OCI-LY7 (cell line): ENCODE measurements at regions of chr20 and their contacts with region 1.

Region 1: GRCh38 chr20:19074828-19075516 is 137.5 kb upstream of the SLC24A3 start:
- DNase-seq: no peak
- H3K4me3 ChIP-seq: no peak overlapping the region
- H3K27ac ChIP-seq: no peak overlapping the region
- H3K4me1 ChIP-seq: peaks cover 30% of the 10 kb centered on the region
- CTCF ChIP-seq: no peak

Region 2: GRCh38 chr20:19026121-19026878 is 48.7 kb before region 1 on chr20:
- CTCF ChIA-PET with region 1: interaction called, 3 read pairs
- POLR2A ChIA-PET with region 1: interaction called, 3 read pairs
- intact Hi-C with region 1: loop called (anchors 5 kb)
- DNase-seq: no peak
- H3K4me3 ChIP-seq: no peak overlapping the region
- H3K27ac ChIP-seq: no peak overlapping the region
- H3K4me1 ChIP-seq: peaks cover 7% of the 10 kb centered on the region
- CTCF ChIP-seq: no peak

Region 3: DNA sequence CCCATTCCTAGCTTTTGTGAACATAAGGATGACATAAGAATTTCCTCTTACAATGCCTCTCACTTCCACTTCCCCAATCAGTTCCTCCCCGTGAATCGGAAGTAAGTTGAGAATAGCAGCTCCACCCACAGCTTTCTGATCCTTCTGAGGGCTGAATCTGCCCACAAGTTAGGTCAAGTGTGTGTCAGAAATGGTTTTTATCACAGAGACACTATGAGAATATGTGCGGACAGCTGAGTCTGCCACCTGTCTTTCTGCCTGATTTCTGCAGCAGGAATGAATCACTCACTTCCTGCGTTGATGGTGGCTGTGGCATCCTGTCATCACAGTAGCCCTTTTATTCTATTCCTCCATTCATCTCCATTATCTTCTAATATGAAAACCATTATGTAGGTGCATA is 753.3 kb after region 1 on chr20:
- CTCF ChIA-PET with region 1: no interaction called
- POLR2A ChIA-PET with region 1: no interaction called
- intact Hi-C with region 1: loop called (anchors 10 kb)
- DNase-seq: peak; percentile 23
- H3K4me3 ChIP-seq: no peak overlapping the region
- H3K27ac ChIP-seq: no peak overlapping the region
- H3K4me1 ChIP-seq: peaks cover 7% of the 10 kb centered on the region
- CTCF ChIP-seq: peak; percentile 41